Left cardiac atrium (tissue), 4 donors: ENCODE measurements at regions of chr10 and their contacts with region 1.

Region 1: GRCh38 chr10:10677479-10677878 is 340.2 kb upstream of the CELF2 start:
- DNase-seq: peak; percentile 68
- ATAC-seq: peak; percentile 82 to 92

Region 2: DNA sequence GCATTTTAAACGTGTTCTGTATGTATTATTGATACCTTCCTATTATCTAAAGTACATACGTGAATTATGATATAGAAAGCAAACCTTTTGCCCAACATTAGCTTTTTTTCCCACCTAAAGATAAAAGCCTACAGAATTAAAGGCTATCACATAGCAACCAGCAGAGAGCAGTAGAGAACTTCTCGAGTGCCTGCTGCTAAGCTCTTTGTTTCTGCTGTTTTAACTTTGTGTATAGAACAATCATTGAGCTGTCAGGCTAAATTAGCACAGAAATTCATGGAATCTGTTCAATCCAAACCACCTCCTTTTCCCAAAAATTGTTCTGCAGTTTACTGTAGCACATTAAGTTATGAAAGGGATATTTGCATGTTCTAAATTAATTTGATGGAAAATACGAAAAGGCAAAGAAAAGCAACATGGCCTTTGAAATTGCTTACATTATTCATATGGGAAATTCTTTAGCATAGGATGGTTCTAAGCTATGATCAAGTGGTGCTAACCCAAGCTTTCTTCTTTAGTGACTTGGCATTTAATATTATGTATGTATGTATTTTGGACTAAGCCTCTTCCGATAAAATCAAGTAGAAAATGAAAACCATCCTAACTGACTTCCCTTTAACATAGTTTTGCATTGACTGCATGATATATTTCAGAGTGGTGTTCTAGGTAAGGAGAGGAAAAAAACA is 1334.5 kb before region 1 on chr10:
- intact Hi-C with region 1: loop called in 1 of 2 experiments (anchors 5 kb)
- DNase-seq: no peak
- ATAC-seq: peak; percentile 33 to 63

Region 3: DNA sequence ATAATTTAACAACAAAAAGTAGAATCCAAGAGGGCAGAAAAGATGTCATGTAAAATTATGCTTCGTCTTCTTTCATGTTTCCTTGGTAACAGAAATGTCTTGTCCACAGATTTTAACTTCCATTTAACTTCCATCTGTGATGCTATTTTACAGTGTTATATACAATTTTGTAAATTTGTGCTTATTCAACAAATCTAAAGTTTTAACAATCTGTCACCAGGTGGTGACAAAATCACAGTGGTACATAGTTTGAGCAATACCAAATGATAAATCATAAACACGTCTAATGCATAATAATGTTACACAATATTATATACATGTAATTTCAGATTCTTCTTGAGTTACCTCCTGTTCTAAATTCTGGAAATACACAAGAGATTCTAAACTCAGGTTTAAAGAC is 444.2 kb before region 1 on chr10:
- intact Hi-C with region 1: loop called in 1 of 2 experiments (anchors 10 kb)
- DNase-seq: no peak
- ATAC-seq: no peak